H1 (cell line): ENCODE measurements at regions of chr19 and their contacts with region 1.

Region 1: GRCh38 chr19:50705422-50706019 is 14.1 kb downstream of the SHANK1 start:
- DNase-seq: peak in 1 of 2 experiments; percentile 67
- H3K4me3 ChIP-seq: no peak overlapping the region
- H3K27ac ChIP-seq: no peak overlapping the region
- H3K4me1 ChIP-seq: peaks cover 0 to 3% (median under 1%) of the 10 kb centered on the region in 4 experiments; a peak in 5 of 7 replicates
- H3K27me3 ChIP-seq: peaks cover 0 to 10% (median 5%) of the 10 kb centered on the region in 4 experiments; a peak in 4 of 7 replicates
- CTCF ChIP-seq: peak; percentile 73 to 85 (median 80)
- EP300 ChIP-seq: no peak
- POLR2A ChIP-seq: no peak
- RAD21 ChIP-seq: peak; percentile 83 to 88

Region 2: GRCh38 chr19:50695251-50696093 is 10.0 kb before region 1 on chr19:
- CTCF ChIA-PET with region 1: interaction called, 11 read pairs
- POLR2A ChIA-PET with region 1: interaction called, 4 read pairs
- DNase-seq: peak in 1 of 2 experiments; percentile 82
- H3K4me3 ChIP-seq: peak overlapping the region; percentile 43 to 60 (median 48)
- H3K27ac ChIP-seq: no peak overlapping the region
- H3K4me1 ChIP-seq: peaks cover 0 to 24% (median 21%) of the 10 kb centered on the region in 4 experiments; a peak in 6 of 7 replicates
- H3K27me3 ChIP-seq: peaks cover 9 to 77% (median 70%) of the 10 kb centered on the region in 4 experiments
- CTCF ChIP-seq: no peak
- EP300 ChIP-seq: no peak
- POLR2A ChIP-seq: no peak
- RAD21 ChIP-seq: no peak

Region 3: DNA sequence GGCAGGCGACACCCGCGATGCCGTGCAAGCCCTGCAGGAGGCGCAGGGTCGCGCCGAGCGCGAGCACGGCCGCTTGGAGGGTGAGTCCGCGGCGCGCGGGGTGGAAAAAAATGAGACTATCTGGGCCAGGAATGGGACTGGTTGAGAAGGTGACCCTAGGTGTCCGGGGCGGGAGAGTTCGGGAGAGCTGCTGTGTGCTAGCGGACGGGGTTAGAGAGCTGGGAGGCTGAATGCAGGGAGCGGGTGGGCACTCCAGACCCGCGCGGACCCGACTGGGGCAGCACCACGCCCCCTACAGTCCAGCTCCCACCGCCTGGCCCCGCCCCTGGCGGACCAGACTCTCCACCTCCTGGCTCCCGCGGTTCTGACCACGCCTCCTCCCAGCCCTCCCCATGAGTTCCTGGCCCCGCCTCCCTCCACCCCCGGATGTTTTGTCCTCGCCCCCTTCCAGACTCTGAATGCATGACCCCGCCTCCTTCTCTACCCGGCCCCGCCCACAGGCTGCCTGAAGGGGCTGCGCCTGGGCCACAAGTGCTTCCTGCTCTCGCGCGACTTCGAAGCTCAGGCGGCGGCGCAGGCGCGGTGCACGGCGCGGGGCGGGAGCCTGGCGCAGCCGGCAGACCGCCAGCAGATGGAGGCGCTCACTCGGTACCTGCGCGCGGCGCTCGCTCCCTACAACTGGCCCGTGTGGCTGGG is 19.1 kb after region 1 on chr19:
- CTCF ChIA-PET with region 1: interaction called, 35 read pairs
- POLR2A ChIA-PET with region 1: interaction called, 5 read pairs
- DNase-seq: peak; percentile 99
- H3K4me3 ChIP-seq: peak overlapping the region; percentile 68 to 82 (median 74)
- H3K27ac ChIP-seq: peak overlapping the region; percentile 20; the same call in 1 of the 2 replicates
- H3K4me1 ChIP-seq: peaks cover 3 to 39% (median 26%) of the 10 kb centered on the region in 4 experiments
- H3K27me3 ChIP-seq: peaks cover 4 to 39% (median 26%) of the 10 kb centered on the region in 4 experiments
- CTCF ChIP-seq: peak; percentile 63 to 80 (median 75)
- EP300 ChIP-seq: no peak
- POLR2A ChIP-seq: peak in 1 of 2 experiments; percentile 93; a peak in 2 of 3 replicates
- RAD21 ChIP-seq: peak; percentile 47 to 61

Region 4: GRCh38 chr19:50777754-50778303 is 72.3 kb after region 1 on chr19:
- CTCF ChIA-PET with region 1: interaction called, 170 read pairs
- POLR2A ChIA-PET with region 1: interaction called, 5 read pairs
- DNase-seq: no peak
- H3K4me3 ChIP-seq: peak overlapping the region in 1 of 4 experiments; percentile 47; a peak in 3 of 8 replicates
- H3K27ac ChIP-seq: no peak overlapping the region
- H3K4me1 ChIP-seq: peaks cover 2 to 7% (median 4%) of the 10 kb centered on the region in 4 experiments; a peak in 5 of 7 replicates
- H3K27me3 ChIP-seq: peaks cover 3 to 53% (median 35%) of the 10 kb centered on the region in 4 experiments
- CTCF ChIP-seq: no peak
- EP300 ChIP-seq: no peak
- POLR2A ChIP-seq: no peak
- RAD21 ChIP-seq: no peak